Activated CD4-positive, alpha-beta T cell treated with anti-CD3 and anti-CD28 coated beads, Interleukin-2, amount 10 ng/mL, durations not matched to agents 24 days and 14 days (primary cell): ENCODE measurements at regions of chr1 and their contacts with region 1.

Region 1: GRCh38 chr1:233295237-233295974 is at the start of gene PCNX2:
- DNase-seq: peak; percentile 89
- H3K4me3 Mint-ChIP-seq: peak within 1 kb of the TSS; percentile 97
- H3K27ac Mint-ChIP-seq: peak within 1 kb of the TSS; percentile 90
- H3K4me1 Mint-ChIP-seq: peaks cover 31% of the 10 kb centered on the region
- H3K27me3 Mint-ChIP-seq: peaks cover under 1% of the 10 kb centered on the region
- total RNA-seq, gene PCNX2: 25.0 and 29.5 TPM in 2 replicates

Region 2: GRCh38 chr1:233113009-233113879 is 182.2 kb before region 1 on chr1:
- intact Hi-C with region 1: loop called (anchors 10 kb)
- DNase-seq: peak; percentile 84
- H3K4me3 Mint-ChIP-seq: peak overlapping the region; percentile 57
- H3K27ac Mint-ChIP-seq: peak overlapping the region; percentile 91
- H3K4me1 Mint-ChIP-seq: peaks cover 33% of the 10 kb centered on the region
- H3K27me3 Mint-ChIP-seq: no peaks in the 10 kb centered on the region

Region 3: DNA sequence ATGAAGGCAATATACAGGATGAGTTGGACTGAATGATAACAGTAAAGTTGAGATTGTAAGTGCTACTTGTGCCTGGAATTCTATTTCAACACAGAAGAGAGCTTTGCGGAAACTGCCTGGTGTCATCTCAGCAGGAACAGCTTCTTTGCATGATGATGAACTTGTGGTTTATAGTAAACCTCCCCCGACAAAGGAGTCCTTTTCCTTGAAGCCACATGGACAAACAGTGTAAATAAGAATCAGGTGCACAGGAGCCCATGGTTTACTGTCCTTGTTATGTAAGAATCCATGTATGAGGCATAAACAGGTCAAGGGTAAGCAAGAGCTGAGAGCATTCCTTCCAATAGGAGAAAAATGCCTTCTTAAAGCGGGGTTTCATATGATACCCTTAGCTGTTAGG is 66.1 kb before region 1 on chr1:
- intact Hi-C with region 1: no loop called
- DNase-seq: no peak
- H3K4me3 Mint-ChIP-seq: no peak overlapping the region
- H3K27ac Mint-ChIP-seq: no peak overlapping the region
- H3K4me1 Mint-ChIP-seq: peaks cover 14% of the 10 kb centered on the region
- H3K27me3 Mint-ChIP-seq: no peaks in the 10 kb centered on the region

Region 4: GRCh38 chr1:233326811-233327650 is 31.6 kb after region 1 on chr1:
- intact Hi-C with region 1: loop called (anchors 5 kb)
- DNase-seq: peak; percentile 93
- H3K4me3 Mint-ChIP-seq: peak overlapping the region; percentile 84
- H3K27ac Mint-ChIP-seq: no peak overlapping the region
- H3K4me1 Mint-ChIP-seq: peaks cover 7% of the 10 kb centered on the region
- H3K27me3 Mint-ChIP-seq: peaks cover 43% of the 10 kb centered on the region